ENCODE measurements at regions of chr11 and their contacts with region 1.

Region 1: GRCh38 chr11:44936525-44936924 is 14.2 kb downstream of the TP53I11 start:
- DNase-seq: peak; percentile 72 to 87
- H3K4me3 ChIP-seq: no peak overlapping the region
- H3K4me1 ChIP-seq: no peaks in the 10 kb centered on the region
- H3K27me3 ChIP-seq: no peaks in the 10 kb centered on the region

Region 2: GRCh38 chr11:44797941-44798606 is 138.5 kb before region 1 on chr11:
- in situ Hi-C with region 1: no loop called
- DNase-seq: peak; percentile 76 to 82
- H3K4me3 ChIP-seq: no peak overlapping the region
- H3K4me1 ChIP-seq: peaks cover 16% of the 10 kb centered on the region
- H3K27me3 ChIP-seq: no peaks in the 10 kb centered on the region

Region 3: GRCh38 chr11:45285930-45286632 is 349.6 kb after region 1 on chr11 and contains the start of gene SYT13:
- in situ Hi-C with region 1: loop called (anchors 25 kb)
- DNase-seq: no peak
- H3K4me3 ChIP-seq: no peak within 1 kb of the TSS
- H3K4me1 ChIP-seq: no peaks in the 10 kb centered on the region
- H3K27me3 ChIP-seq: peaks cover 45% of the 10 kb centered on the region

Measured in HAP-1 (cell line).